ENCODE measurements at regions of chr9 and their contacts with region 1.

Region 1: GRCh38 chr9:96217754-96218693 is 84.0 kb downstream of the HSD17B3 start:
- DNase-seq: peak; percentile 59
- H3K4me3 Mint-ChIP-seq: peak overlapping the region; percentile 76
- H3K27ac Mint-ChIP-seq: no peak overlapping the region
- H3K4me1 Mint-ChIP-seq: peaks cover 15% of the 10 kb centered on the region
- H3K27me3 Mint-ChIP-seq: peaks cover 54% of the 10 kb centered on the region

Region 2: GRCh38 chr9:94681508-94681907 is 1536.5 kb before region 1 on chr9:
- intact Hi-C with region 1: loop called (anchors 10 kb)
- DNase-seq: peak; percentile 43
- H3K4me3 Mint-ChIP-seq: no peak overlapping the region
- H3K27ac Mint-ChIP-seq: no peak overlapping the region
- H3K4me1 Mint-ChIP-seq: no peaks in the 10 kb centered on the region
- H3K27me3 Mint-ChIP-seq: peaks cover 27% of the 10 kb centered on the region

Region 3: GRCh38 chr9:95127249-95128176 is 1090.5 kb before region 1 on chr9:
- intact Hi-C with region 1: loop called (anchors 1 kb)
- DNase-seq: peak; percentile 56
- H3K4me3 Mint-ChIP-seq: no peak overlapping the region
- H3K27ac Mint-ChIP-seq: no peak overlapping the region
- H3K4me1 Mint-ChIP-seq: peaks cover 7% of the 10 kb centered on the region
- H3K27me3 Mint-ChIP-seq: no peaks in the 10 kb centered on the region

Region 4: GRCh38 chr9:95268681-95269080 is 949.3 kb before region 1 on chr9:
- intact Hi-C with region 1: loop called (anchors 5 kb)
- DNase-seq: peak; percentile 2
- H3K4me3 Mint-ChIP-seq: no peak overlapping the region
- H3K27ac Mint-ChIP-seq: no peak overlapping the region
- H3K4me1 Mint-ChIP-seq: peaks cover 62% of the 10 kb centered on the region
- H3K27me3 Mint-ChIP-seq: peaks cover 2% of the 10 kb centered on the region

Region 5: GRCh38 chr9:95510709-95511615 is 707.1 kb before region 1 on chr9:
- intact Hi-C with region 1: loop called (anchors 5 kb)
- DNase-seq: peak; percentile 82
- H3K4me3 Mint-ChIP-seq: peak overlapping the region; percentile 84
- H3K27ac Mint-ChIP-seq: peak overlapping the region; percentile 88
- H3K4me1 Mint-ChIP-seq: peaks cover 41% of the 10 kb centered on the region
- H3K27me3 Mint-ChIP-seq: peaks cover 61% of the 10 kb centered on the region

Region 6: GRCh38 chr9:96071076-96071814 is 146.8 kb before region 1 on chr9:
- intact Hi-C with region 1: loop called (anchors 10 kb)
- DNase-seq: no peak
- H3K4me3 Mint-ChIP-seq: no peak overlapping the region
- H3K27ac Mint-ChIP-seq: no peak overlapping the region
- H3K4me1 Mint-ChIP-seq: peaks cover 9% of the 10 kb centered on the region
- H3K27me3 Mint-ChIP-seq: peaks cover 18% of the 10 kb centered on the region

Region 7: DNA sequence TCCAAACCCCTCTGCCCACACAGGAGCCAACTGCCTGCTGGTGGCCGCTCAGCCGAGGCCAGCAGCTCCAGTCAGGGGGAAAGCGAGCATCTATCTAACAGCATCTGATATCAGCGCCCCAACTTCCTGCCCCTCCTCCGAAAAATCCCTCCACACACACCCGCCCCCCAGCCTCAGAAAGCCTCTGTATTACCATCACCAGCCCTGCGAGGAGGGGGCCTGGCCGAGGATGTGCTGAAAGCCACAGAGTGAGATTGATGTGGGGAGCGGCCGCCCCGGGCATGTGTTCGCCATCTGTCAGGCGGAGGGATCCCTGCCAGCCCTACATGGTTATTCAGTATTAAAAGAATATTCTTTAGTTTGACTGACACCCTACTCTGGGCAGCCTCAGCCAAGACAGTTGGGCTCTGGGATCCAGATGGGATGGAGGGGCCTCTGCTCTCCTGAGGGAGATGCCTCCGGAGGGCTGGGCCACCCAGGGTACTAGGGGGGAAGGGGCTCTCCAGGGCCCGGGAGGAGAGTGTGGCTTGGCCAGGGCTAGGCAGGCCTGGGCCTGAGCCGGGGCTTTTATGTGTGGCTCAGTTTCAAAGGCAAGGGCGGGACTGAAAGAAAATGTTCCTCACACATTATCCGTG is 14.0 kb before region 1 on chr9:
- intact Hi-C with region 1: no loop called
- DNase-seq: no peak
- H3K4me3 Mint-ChIP-seq: no peak overlapping the region
- H3K27ac Mint-ChIP-seq: no peak overlapping the region
- H3K4me1 Mint-ChIP-seq: no peaks in the 10 kb centered on the region
- H3K27me3 Mint-ChIP-seq: peaks cover 8% of the 10 kb centered on the region

Region 8: DNA sequence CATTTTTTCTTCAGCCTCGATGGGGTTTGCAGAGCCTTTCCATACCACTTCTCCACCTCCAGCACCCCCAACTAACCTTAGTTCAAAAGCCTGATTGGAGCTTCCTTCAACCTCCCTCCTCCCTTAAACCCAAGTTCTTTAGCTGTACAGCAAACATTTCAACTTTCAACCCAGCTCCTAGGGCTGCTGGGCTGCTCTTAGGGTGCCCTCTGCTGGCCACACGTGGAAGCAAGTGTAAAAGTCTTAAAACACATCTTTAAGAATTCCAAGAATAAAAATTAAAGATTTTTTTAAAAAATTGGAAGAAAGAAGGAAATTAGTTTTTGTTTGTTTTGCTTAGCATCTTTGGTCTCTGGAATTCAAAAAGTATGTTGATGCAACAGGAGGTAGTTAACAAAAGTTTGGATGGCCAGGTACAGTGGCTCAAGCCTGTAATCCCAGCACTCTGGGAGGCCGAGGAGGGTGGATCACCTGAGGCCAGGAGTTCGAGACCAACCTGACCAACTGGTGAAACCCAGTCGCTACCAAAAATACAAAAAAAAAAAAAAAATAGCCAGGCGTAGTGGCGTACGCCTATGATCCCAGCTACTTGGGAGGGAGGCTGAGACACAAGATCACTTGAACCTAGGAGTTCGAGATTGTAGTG is 99.4 kb after region 1 on chr9:
- intact Hi-C with region 1: loop called (anchors 5 kb)
- DNase-seq: peak; percentile 6
- H3K4me3 Mint-ChIP-seq: no peak overlapping the region
- H3K27ac Mint-ChIP-seq: no peak overlapping the region
- H3K4me1 Mint-ChIP-seq: no peaks in the 10 kb centered on the region
- H3K27me3 Mint-ChIP-seq: peaks cover 3% of the 10 kb centered on the region

Measured in activated T-helper 1 cell treated with anti-CD3 and anti-CD28 coated beads, Interleukin-12 subunit alpha, Interleukin-12 subunit beta, Interleukin-2, Interleukin-4 antibody, amounts not matched to agents 30 ng/mL and 10 ng/mL and 1 ng/mL, durations not matched to agents 14 hours and 24 hours and 36 hours (primary cell).